Activated CD4-positive, alpha-beta T cell treated with anti-CD3 and anti-CD28 coated beads for 36 hours (primary cell): ENCODE measurements at regions of chr2 and their contacts with region 1.

Region 1: GRCh38 chr2:72150157-72150865 is 2.6 kb upstream of the CYP26B1 start:
- DNase-seq: peak; percentile 81
- ATAC-seq: peak; percentile 80
- H3K4me3 Mint-ChIP-seq: peak overlapping the region; percentile 34
- H3K27ac Mint-ChIP-seq: no peak overlapping the region
- H3K4me1 Mint-ChIP-seq: peaks cover 36% of the 10 kb centered on the region
- H3K27me3 Mint-ChIP-seq: peaks cover 62% of the 10 kb centered on the region

Region 2: GRCh38 chr2:71530641-71531332 is 619.5 kb before region 1 on chr2:
- CTCF ChIA-PET with region 1: no interaction called
- POLR2A ChIA-PET with region 1: interaction called, 3 read pairs
- intact Hi-C with region 1: loop called in 1 of 2 experiments (anchors 1 kb)
- DNase-seq: peak; percentile 46
- ATAC-seq: peak; percentile 65
- H3K4me3 Mint-ChIP-seq: no peak overlapping the region
- H3K27ac Mint-ChIP-seq: no peak overlapping the region
- H3K4me1 Mint-ChIP-seq: peaks cover 2% of the 10 kb centered on the region
- H3K27me3 Mint-ChIP-seq: peaks cover 29% of the 10 kb centered on the region

Region 3: GRCh38 chr2:71609958-71610357 is 540.4 kb before region 1 on chr2:
- CTCF ChIA-PET with region 1: interaction called, 6 read pairs
- POLR2A ChIA-PET with region 1: no interaction called
- intact Hi-C with region 1: loop called in 1 of 2 experiments (anchors 1 kb)
- DNase-seq: no peak
- ATAC-seq: no peak
- H3K4me3 Mint-ChIP-seq: no peak overlapping the region
- H3K27ac Mint-ChIP-seq: no peak overlapping the region
- H3K4me1 Mint-ChIP-seq: peaks cover 2% of the 10 kb centered on the region
- H3K27me3 Mint-ChIP-seq: peaks cover 2% of the 10 kb centered on the region

Region 4: DNA sequence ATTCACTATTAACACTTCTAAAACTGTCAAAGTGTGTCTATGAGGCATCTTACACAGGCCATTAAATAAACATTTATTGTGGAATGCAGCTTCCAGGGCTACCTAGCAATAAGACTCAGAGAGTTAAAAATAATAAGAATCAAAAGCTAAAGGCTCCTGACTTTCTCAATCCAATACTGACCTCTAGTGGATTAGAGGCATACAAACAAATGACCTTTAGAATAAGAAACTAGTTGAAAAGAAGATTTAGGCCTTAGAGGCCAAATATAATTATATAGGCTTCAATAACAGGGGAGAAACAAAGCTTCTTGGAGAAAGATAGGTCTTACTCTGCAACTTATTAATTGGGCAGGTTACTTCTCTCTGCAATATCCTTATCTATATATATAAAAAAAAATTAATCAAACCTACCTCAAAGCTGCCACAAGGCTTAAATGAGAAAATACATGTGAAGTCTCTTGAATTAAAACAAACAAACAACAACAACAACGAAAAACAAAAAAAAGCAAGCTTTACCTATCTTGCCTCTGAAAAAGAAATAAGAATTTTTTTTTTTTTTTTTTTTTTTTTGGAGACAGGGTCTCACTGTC is 429.4 kb after region 1 on chr2:
- CTCF ChIA-PET with region 1: no interaction called
- POLR2A ChIA-PET with region 1: no interaction called
- intact Hi-C with region 1: loop called (anchors 2 to 5 kb)
- DNase-seq: no peak
- ATAC-seq: no peak
- H3K4me3 Mint-ChIP-seq: no peak overlapping the region
- H3K27ac Mint-ChIP-seq: no peak overlapping the region
- H3K4me1 Mint-ChIP-seq: no peaks in the 10 kb centered on the region
- H3K27me3 Mint-ChIP-seq: no peaks in the 10 kb centered on the region

Region 5: DNA sequence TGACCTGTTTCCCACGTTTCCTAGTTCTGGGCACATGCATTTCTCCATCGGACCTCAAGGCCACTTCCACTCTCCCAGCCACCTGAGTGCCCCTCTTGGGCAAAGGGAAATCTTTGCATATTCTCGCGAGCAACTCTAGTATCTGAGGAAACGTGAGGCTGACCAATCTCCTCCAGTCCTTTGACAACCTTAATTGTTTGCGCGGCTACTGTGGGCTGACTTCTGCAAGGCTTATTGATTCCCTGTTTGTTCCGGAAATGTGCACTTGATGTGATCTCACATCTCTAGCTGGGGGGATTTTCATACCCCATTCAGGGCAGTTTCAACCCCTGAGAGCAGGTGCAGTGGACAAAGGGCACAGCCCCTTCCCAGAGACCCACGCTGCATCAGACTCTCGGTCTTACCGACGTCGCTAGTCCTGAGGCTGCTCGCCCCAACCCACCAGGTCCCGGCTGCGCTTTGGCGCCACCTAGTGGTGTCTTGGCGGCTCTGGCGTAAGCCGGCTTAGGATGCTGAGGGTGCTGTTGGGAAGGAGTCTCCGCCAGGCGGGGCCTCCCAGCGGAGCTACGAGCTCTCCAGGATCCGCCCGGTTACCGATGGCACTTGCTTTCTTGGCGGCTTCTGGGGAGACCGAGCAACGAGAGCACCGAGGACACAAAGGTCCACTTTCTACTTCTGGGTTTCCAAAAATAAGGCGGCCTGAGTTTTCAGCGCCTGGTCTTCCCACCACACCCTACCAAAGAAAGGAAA is 712.1 kb after region 1 on chr2:
- CTCF ChIA-PET with region 1: no interaction called
- POLR2A ChIA-PET with region 1: no interaction called
- intact Hi-C with region 1: loop called in 1 of 2 experiments (anchors 5 kb)
- DNase-seq: peak; percentile 93
- ATAC-seq: peak; percentile 92
- H3K4me3 Mint-ChIP-seq: peak overlapping the region; percentile 36
- H3K27ac Mint-ChIP-seq: peak overlapping the region; percentile 2
- H3K4me1 Mint-ChIP-seq: peaks cover 10% of the 10 kb centered on the region
- H3K27me3 Mint-ChIP-seq: peaks cover 50% of the 10 kb centered on the region

Region 6: GRCh38 chr2:72924353-72925240 is 774.3 kb after region 1 on chr2:
- CTCF ChIA-PET with region 1: interaction called, 3 read pairs
- POLR2A ChIA-PET with region 1: no interaction called
- intact Hi-C with region 1: loop called (anchors 5 kb)
- DNase-seq: peak; percentile 38
- ATAC-seq: peak; percentile 13
- H3K4me3 Mint-ChIP-seq: no peak overlapping the region
- H3K27ac Mint-ChIP-seq: no peak overlapping the region
- H3K4me1 Mint-ChIP-seq: peaks cover 7% of the 10 kb centered on the region
- H3K27me3 Mint-ChIP-seq: peaks cover 43% of the 10 kb centered on the region